Adrenal gland (tissue), 19 donors: ENCODE measurements at regions of chr7 and their contacts with region 1.

Region 1: GRCh38 chr7:107836237-107837144 is 33.5 kb upstream of the SLC26A3 start:
- DNase-seq: peak in 3 of 7 donors; percentile 16 to 49 (median 39)
- H3K4me3 ChIP-seq: no peak overlapping the region
- H3K27ac ChIP-seq: no peak overlapping the region
- H3K4me1 ChIP-seq: peaks cover 0 to 9% of the 10 kb centered on the region in 2 donors
- H3K27me3 ChIP-seq: peaks cover 23% of the 10 kb centered on the region
- CTCF ChIP-seq: no peak
- POLR2A ChIP-seq: no peak

Region 2: DNA sequence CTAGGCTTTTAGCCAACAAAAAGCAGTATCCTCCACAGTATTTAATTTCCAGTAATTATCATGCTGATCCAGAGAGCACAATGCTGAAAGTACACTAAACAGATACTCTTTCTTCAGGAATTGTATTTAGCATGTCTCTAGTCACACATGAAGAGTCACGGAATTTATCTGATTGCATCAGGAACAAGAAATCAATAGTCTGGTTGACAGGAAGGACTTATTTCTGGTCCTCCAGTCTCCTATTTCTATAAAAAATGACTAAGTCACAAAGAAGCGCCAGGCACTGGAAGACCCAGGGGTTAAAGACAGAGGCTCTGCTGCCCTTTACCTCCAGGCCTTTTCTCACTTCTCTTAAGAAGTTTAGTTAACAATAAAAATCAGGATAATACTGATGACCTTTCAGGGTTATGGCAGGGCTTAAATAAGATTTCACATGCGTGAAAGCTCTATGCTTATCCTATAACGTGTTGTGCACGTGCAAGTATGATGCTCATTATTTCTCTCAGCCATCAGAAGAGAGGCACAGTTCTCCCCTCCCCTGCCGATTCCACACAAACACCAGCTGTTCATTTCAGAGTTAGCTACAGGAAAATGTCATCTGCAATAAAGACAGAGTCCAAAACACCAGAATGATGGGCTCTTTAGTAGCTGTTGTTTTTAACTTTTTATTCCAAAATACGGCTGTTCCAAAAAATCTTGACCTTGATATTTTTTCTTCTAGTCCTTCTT is 139.0 kb before region 1 on chr7:
- intact Hi-C with region 1: no loop called
- DNase-seq: no peak
- H3K4me3 ChIP-seq: no peak overlapping the region
- H3K27ac ChIP-seq: no peak overlapping the region
- H3K4me1 ChIP-seq: no peaks in the 10 kb centered on the region
- H3K27me3 ChIP-seq: no peaks in the 10 kb centered on the region
- CTCF ChIP-seq: no peak
- POLR2A ChIP-seq: no peak

Region 3: DNA sequence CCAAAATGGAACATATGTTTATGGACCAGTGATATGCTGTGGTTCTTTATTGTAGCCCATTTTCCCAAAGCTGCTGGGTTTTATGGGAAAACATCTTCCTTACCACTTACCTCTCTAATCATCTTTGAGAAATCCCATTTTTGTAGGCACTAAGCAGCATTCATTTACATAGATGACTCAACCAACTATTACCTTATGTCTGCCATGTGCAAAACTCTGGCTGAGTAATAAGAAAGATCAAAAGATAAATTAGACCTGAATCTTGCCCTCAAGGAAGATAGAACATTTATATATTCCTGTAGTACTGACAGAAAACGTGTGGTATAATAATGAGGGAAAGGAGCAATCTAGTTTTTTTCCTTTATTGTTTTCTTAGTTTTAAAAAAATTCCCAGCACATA is 68.2 kb before region 1 on chr7:
- intact Hi-C with region 1: loop called in 1 of 2 experiments (anchors 10 kb)
- DNase-seq: no peak
- H3K4me3 ChIP-seq: no peak overlapping the region
- H3K27ac ChIP-seq: no peak overlapping the region
- H3K4me1 ChIP-seq: no peaks in the 10 kb centered on the region
- H3K27me3 ChIP-seq: no peaks in the 10 kb centered on the region
- CTCF ChIP-seq: no peak
- POLR2A ChIP-seq: no peak